ENCODE measurements at regions of chr6 and their contacts with region 1.

Region 1: DNA sequence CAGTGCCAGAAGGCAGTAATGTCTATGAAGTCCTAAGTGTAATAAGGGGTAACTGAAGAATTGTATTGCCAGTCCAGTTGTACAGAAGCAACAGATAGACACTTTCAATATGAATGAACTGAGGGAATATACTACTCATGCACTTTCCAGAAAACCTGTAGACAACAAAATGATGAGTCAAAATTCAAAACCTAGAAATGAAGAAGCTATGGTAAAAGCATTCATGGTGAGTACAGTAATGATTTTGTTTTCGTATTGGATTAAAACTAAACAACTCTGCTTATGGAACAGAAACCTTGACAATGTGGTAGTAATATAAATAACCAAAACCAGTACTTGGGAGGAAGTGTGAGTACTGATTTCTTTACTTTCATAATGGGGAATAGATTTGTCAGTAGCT is 35.0 kb downstream of the ARMC2 start:
- DNase-seq: no peak
- H3K4me3 Mint-ChIP-seq: no peak overlapping the region
- H3K27ac Mint-ChIP-seq: peak overlapping the region; percentile 73
- H3K4me1 Mint-ChIP-seq: peaks cover 38% of the 10 kb centered on the region
- H3K27me3 Mint-ChIP-seq: peaks cover 6% of the 10 kb centered on the region

Region 2: GRCh38 chr6:108438918-108439317 is 444.3 kb before region 1 on chr6:
- CTCF ChIA-PET with region 1: no interaction called
- POLR2A ChIA-PET with region 1: no interaction called
- intact Hi-C with region 1: loop called (anchors 2 kb)
- DNase-seq: no peak
- H3K4me3 Mint-ChIP-seq: no peak overlapping the region
- H3K27ac Mint-ChIP-seq: no peak overlapping the region
- H3K4me1 Mint-ChIP-seq: no peaks in the 10 kb centered on the region
- H3K27me3 Mint-ChIP-seq: peaks cover 28% of the 10 kb centered on the region

Region 3: GRCh38 chr6:108541838-108542759 is 341.1 kb before region 1 on chr6:
- CTCF ChIA-PET with region 1: interaction called, 11 read pairs
- POLR2A ChIA-PET with region 1: no interaction called
- intact Hi-C with region 1: no loop called
- DNase-seq: peak; percentile 79
- H3K4me3 Mint-ChIP-seq: peak overlapping the region; percentile 17
- H3K27ac Mint-ChIP-seq: no peak overlapping the region
- H3K4me1 Mint-ChIP-seq: peaks cover 7% of the 10 kb centered on the region
- H3K27me3 Mint-ChIP-seq: peaks cover 6% of the 10 kb centered on the region

Region 4: DNA sequence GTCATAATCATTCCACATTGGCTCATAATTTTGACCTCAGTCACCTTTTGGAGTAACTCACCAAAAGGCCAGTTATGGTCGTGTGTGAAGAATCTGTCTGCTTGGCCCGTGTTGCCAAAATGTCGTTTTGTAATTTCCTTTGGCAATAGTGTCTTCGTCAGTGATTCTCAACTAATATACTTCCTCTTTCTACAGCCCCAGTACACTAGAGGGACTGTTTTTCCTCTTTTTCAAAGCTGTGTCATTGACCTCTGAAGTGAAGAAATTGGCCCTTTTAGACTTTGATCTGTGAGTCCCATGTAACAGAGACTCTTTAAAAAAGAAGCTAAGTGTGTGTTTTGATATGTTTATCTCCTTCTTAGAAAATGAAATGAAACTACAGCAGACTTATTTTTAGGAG is 317.3 kb before region 1 on chr6:
- CTCF ChIA-PET with region 1: no interaction called
- POLR2A ChIA-PET with region 1: interaction called, 3 read pairs
- intact Hi-C with region 1: loop called (anchors 2 kb)
- DNase-seq: no peak
- H3K4me3 Mint-ChIP-seq: no peak overlapping the region
- H3K27ac Mint-ChIP-seq: peak overlapping the region; percentile 70
- H3K4me1 Mint-ChIP-seq: peaks cover 68% of the 10 kb centered on the region
- H3K27me3 Mint-ChIP-seq: no peaks in the 10 kb centered on the region

Region 5: DNA sequence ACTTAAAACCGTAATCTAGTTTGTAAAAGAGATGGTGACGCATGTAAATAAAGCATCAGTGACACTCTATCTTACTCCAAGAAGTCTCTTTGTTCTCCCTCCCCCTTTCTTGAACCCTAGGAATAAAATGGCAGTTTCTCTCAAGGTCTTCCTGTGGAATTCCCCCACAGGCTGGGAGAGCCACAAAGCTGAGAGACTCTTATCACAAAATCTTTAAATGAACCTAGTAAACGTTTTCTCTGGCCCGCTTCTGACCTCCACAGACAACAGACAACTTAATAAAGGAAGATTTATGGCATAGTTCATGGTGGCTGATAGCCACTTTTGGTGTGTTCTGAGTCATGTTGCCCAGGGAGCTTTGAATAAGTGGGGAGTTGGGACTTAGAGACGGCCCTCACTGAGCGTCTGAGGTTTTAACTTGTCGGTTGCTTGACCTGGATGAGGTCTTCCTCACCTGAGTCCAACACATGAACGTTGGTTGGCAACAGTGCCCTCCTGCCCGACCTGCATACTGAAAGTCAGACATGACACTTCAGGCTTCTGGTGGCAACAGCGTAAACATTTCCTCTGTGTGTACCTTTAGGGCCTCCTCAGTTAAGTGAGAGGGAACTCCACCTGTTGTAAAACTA is 198.4 kb before region 1 on chr6:
- CTCF ChIA-PET with region 1: no interaction called
- POLR2A ChIA-PET with region 1: no interaction called
- intact Hi-C with region 1: no loop called
- DNase-seq: no peak
- H3K4me3 Mint-ChIP-seq: no peak overlapping the region
- H3K27ac Mint-ChIP-seq: no peak overlapping the region
- H3K4me1 Mint-ChIP-seq: peaks cover 6% of the 10 kb centered on the region
- H3K27me3 Mint-ChIP-seq: no peaks in the 10 kb centered on the region

Region 6: DNA sequence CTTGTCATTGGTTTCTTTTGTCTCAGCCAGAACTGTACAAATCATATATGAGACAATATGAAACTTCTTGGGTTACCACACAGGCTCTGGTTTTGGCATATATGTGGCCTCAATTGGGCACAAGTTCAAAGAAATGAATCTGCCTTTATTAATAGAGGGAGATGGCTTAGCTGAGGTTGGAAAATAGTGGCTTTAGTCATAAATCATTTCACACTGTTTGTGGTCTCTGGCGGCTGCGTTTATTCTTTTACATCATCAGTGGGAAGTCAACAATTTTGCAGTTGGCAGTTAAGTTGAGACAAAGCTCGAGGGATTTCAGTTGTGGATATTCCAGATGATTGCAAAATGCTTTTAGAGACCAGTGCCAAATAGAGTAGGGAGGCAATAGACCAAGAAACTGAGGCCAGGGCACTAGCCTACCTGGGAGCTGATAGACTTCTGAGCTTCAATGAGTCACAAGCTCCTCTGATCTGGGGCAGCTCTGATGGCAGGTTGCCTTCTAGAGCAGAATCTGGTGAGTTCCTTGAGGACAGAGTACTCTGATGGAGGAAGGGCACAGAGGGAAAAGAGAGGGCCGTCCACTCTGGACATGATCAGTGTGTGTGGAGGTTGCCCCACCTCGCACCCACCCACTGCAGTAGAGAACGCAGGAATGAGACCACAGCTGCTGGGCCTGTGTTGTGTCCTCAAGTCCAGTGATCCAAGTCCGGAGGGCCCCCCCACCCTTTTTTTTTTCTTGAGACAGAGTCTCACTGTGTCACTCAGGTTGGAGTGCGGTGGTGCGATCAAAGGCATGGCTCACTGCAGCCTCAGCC is 38.6 kb after region 1 on chr6:
- CTCF ChIA-PET with region 1: interaction called, 12 read pairs
- POLR2A ChIA-PET with region 1: interaction called, 4 read pairs
- intact Hi-C with region 1: loop called (anchors 1 kb)
- DNase-seq: peak; percentile 68
- H3K4me3 Mint-ChIP-seq: peak overlapping the region; percentile 33
- H3K27ac Mint-ChIP-seq: peak overlapping the region; percentile 81
- H3K4me1 Mint-ChIP-seq: peaks cover 31% of the 10 kb centered on the region
- H3K27me3 Mint-ChIP-seq: peaks cover 4% of the 10 kb centered on the region

Region 7: DNA sequence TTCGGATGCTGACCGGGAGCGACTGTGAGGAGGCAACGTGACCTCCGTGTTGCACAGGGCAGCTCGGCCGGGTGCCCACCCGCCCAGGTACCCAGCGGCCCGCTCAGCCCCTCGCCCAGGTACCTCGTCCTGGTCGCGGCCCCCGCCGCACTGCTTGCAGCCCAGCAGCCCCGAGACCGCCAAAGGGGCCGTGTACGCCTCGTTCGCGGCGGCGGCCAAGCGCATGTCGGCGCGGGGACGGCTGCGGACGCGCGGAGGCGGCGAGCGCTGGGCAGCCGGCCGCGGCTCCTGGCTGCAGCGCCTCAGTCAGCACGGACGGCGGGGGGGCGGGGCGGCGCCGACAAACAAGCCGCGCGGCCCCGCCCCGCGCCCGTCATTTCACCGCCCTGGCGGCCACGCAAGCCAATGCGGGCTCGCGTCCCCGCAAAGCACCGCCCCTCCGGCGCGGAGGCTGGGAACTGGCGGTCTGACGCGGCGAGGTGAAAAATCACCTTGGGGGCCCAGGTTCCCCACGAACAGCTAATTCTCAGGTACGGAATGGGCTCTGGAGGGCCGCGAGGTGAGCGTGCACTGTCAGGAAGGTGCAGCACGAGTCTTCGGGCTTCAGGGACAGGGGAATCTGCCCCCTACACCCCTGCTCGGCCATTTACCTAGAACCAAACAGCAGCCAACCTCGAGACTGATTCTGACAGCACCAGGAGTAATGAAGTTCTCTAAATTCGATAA is 126.2 kb after region 1 on chr6:
- CTCF ChIA-PET with region 1: interaction called, 4 read pairs
- POLR2A ChIA-PET with region 1: interaction called, 3 read pairs
- intact Hi-C with region 1: loop called (anchors 1 kb)
- DNase-seq: peak; percentile 93
- H3K4me3 Mint-ChIP-seq: peak overlapping the region; percentile 94
- H3K27ac Mint-ChIP-seq: peak overlapping the region; percentile 92
- H3K4me1 Mint-ChIP-seq: peaks cover 60% of the 10 kb centered on the region
- H3K27me3 Mint-ChIP-seq: no peaks in the 10 kb centered on the region

Region 8: DNA sequence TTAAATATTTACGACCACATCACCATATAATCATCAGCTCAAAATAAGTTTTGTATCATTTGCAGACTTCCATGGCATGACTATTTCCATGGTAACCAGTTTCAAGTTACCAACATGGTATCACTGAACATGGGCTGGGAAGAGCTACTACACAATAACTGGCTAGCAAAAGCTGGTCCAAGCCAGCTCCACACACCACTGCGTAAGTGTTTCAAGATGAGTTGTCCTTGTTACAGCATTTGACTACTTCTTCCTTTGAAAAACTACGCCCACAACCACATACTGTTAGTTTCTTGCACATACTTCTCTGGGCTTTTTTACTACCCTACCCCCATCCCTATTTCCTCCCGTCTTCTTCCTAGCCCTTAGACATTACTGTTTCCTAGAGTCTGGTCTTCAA is 490.6 kb after region 1 on chr6:
- CTCF ChIA-PET with region 1: no interaction called
- POLR2A ChIA-PET with region 1: no interaction called
- intact Hi-C with region 1: loop called (anchors 1 kb)
- DNase-seq: peak; percentile 80
- H3K4me3 Mint-ChIP-seq: peak overlapping the region; percentile 63
- H3K27ac Mint-ChIP-seq: peak overlapping the region; percentile 99
- H3K4me1 Mint-ChIP-seq: peaks cover 75% of the 10 kb centered on the region
- H3K27me3 Mint-ChIP-seq: no peaks in the 10 kb centered on the region

Measured in activated CD4-positive, alpha-beta memory T cell treated with anti-CD3 and anti-CD28 coated beads for 36 hours (primary cell).